ENCODE measurements at regions of chr11 and their contacts with region 1.

Region 1: GRCh38 chr11:15525582-15525981 is 410.9 kb downstream of the INSC start:
- DNase-seq: no peak

Region 2: GRCh38 chr11:14396273-14396672 is 1129.3 kb before region 1 on chr11:
- intact Hi-C with region 1: no loop called
- DNase-seq: no peak

Region 3: GRCh38 chr11:15446929-15447328 is 78.7 kb before region 1 on chr11:
- intact Hi-C with region 1: loop called in 1 of 2 experiments (anchors 5 kb)
- DNase-seq: no peak

Region 4: DNA sequence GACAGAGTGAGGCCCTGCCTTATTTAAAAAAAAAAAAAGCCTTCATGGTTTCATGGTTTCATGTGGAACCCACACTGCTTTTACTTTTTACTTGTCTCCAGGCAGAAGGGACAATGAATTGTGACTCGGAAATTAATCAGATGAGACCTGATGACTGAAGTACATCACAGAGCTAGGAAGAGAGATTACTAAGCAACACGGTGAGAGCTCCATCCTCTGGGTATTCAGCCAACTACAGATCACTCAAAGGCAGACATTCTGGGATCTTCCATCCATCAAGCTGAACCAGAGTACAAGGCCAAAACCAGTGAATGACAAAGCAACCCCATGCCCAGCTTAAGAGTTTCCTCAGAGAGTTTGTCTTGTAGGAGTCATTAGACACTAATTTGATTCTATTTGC is 397.6 kb after region 1 on chr11:
- intact Hi-C with region 1: no loop called
- DNase-seq: no peak

Measured in posterior vena cava (tissue), 2 donors.